ENCODE measurements at regions of chr5 and their contacts with region 1.

Region 1: GRCh38 chr5:171484460-171484899 is 65.0 kb downstream of the FGF18 start:
- DNase-seq: peak; percentile 29
- H3K4me3 ChIP-seq: no peak overlapping the region
- H3K27ac ChIP-seq: no peak overlapping the region
- H3K4me1 ChIP-seq: no peaks in the 10 kb centered on the region
- CTCF ChIP-seq: peak; percentile 94

Region 2: DNA sequence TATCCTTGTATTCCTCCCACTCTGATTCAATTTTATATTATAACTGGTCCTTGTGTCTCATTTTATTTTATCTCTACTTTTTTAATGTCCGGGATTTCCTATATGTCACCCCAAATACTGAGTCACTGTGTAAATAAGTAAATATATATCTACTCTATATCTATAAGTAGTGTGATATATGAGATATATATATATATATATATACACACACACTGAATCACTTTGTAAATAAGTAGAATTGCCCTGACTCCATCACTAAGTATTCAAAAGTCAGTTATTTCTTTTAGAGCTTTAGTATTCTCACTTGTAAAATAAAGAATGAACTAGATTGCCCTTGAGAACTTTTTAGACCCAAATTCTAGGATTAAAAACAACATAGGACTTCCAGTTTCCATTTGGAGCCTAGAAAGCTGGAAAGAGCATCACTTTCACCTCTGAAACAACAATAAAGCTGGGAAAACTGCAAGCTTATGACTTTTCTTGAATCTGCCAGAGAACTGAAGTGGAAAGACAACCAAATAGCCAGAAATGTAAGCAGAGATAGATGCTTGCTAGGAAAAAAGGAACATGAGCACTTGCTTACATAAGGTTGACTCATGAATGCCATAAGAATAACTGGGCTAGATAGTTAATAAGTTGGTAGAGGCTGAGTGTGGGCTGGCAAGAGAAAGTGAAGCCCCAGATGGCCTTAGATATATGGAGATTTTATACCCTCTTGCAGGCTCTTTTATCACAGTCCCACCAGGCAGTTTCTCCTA is 346.5 kb before region 1 on chr5:
- CTCF ChIA-PET with region 1: no interaction called
- POLR2A ChIA-PET with region 1: no interaction called
- intact Hi-C with region 1: no loop called
- DNase-seq: no peak
- H3K4me3 ChIP-seq: no peak overlapping the region
- H3K27ac ChIP-seq: no peak overlapping the region
- H3K4me1 ChIP-seq: no peaks in the 10 kb centered on the region
- CTCF ChIP-seq: no peak

Region 3: GRCh38 chr5:171543148-171543815 is 58.8 kb after region 1 on chr5:
- CTCF ChIA-PET with region 1: no interaction called
- POLR2A ChIA-PET with region 1: no interaction called
- intact Hi-C with region 1: no loop called
- DNase-seq: no peak
- H3K4me3 ChIP-seq: no peak overlapping the region
- H3K27ac ChIP-seq: no peak overlapping the region
- H3K4me1 ChIP-seq: no peaks in the 10 kb centered on the region
- CTCF ChIP-seq: no peak

Region 4: DNA sequence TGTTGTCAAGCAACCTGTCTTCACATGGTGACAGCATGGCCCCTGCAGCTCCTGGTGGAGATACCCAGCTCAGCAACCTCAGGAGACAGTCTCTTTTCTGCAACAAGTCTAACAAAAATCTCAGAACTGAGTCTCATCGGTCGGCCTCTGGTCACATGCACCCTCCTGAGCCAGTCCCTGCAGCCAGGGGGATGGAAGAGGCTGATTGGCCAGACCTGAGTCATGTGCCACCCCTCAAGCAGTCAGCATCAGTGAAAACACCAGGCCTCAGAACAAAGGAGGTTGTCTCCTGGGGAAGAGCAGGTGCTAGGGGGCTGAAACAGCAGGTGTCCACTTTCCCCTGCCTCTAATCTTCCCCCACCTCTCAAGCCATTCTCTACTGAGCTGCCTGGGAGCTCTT is 355.6 kb after region 1 on chr5:
- CTCF ChIA-PET with region 1: no interaction called
- POLR2A ChIA-PET with region 1: no interaction called
- intact Hi-C with region 1: no loop called
- DNase-seq: peak; percentile 37
- H3K4me3 ChIP-seq: no peak overlapping the region
- H3K27ac ChIP-seq: no peak overlapping the region
- H3K4me1 ChIP-seq: peaks cover 4% of the 10 kb centered on the region
- CTCF ChIP-seq: no peak

Region 5: GRCh38 chr5:171907725-171908343 is 423.4 kb after region 1 on chr5:
- CTCF ChIA-PET with region 1: no interaction called
- POLR2A ChIA-PET with region 1: no interaction called
- intact Hi-C with region 1: loop called (anchors 2 kb)
- DNase-seq: peak; percentile 68
- H3K4me3 ChIP-seq: no peak overlapping the region
- H3K27ac ChIP-seq: no peak overlapping the region
- H3K4me1 ChIP-seq: peaks cover 5% of the 10 kb centered on the region
- CTCF ChIP-seq: peak; percentile 97

Region 6: GRCh38 chr5:172044631-172045314 is 560.3 kb after region 1 on chr5:
- CTCF ChIA-PET with region 1: no interaction called
- POLR2A ChIA-PET with region 1: no interaction called
- intact Hi-C with region 1: loop called (anchors 5 kb)
- DNase-seq: no peak
- H3K4me3 ChIP-seq: no peak overlapping the region
- H3K27ac ChIP-seq: no peak overlapping the region
- H3K4me1 ChIP-seq: peaks cover 5% of the 10 kb centered on the region
- CTCF ChIP-seq: 0 out of 2 replicates have a peak, but pooled peaks have one; percentile 16